A549 (cell line): ENCODE measurements at regions of chr16 and their contacts with region 1.

Region 1: GRCh38 chr16:85610508-85611332 is 2.4 kb upstream of the GSE1 start:
- DNase-seq: peak; percentile 84 to 85
- ATAC-seq: peak; percentile 32 to 63
- H3K4me3 ChIP-seq: peak overlapping the region; percentile 96
- H3K27ac ChIP-seq: peak overlapping the region; percentile 98 to 99
- H3K4me1 ChIP-seq: peaks cover 22% of the 10 kb centered on the region
- CTCF ChIP-seq: peak; percentile 99
- EP300 ChIP-seq: no peak
- POLR2A ChIP-seq: no peak
- RAD21 ChIP-seq: peak; percentile 89 to 98

Region 2: GRCh38 chr16:85126705-85127419 is 483.9 kb before region 1 on chr16:
- CTCF ChIA-PET with region 1: no interaction called
- POLR2A ChIA-PET with region 1: no interaction called
- DNase-seq: no peak
- ATAC-seq: peak in 1 of 2 experiments; percentile 13; a peak in 1 of 6 replicates
- H3K4me3 ChIP-seq: no peak overlapping the region
- H3K27ac ChIP-seq: peak overlapping the region in 1 of 2 experiments; percentile 29; a peak in 1 of 6 replicates
- H3K4me1 ChIP-seq: 0 out of 3 replicates have a peak, but pooled peaks cover 3% of the 10 kb centered on the region
- CTCF ChIP-seq: no peak
- EP300 ChIP-seq: no peak
- POLR2A ChIP-seq: no peak
- RAD21 ChIP-seq: no peak

Region 3: DNA sequence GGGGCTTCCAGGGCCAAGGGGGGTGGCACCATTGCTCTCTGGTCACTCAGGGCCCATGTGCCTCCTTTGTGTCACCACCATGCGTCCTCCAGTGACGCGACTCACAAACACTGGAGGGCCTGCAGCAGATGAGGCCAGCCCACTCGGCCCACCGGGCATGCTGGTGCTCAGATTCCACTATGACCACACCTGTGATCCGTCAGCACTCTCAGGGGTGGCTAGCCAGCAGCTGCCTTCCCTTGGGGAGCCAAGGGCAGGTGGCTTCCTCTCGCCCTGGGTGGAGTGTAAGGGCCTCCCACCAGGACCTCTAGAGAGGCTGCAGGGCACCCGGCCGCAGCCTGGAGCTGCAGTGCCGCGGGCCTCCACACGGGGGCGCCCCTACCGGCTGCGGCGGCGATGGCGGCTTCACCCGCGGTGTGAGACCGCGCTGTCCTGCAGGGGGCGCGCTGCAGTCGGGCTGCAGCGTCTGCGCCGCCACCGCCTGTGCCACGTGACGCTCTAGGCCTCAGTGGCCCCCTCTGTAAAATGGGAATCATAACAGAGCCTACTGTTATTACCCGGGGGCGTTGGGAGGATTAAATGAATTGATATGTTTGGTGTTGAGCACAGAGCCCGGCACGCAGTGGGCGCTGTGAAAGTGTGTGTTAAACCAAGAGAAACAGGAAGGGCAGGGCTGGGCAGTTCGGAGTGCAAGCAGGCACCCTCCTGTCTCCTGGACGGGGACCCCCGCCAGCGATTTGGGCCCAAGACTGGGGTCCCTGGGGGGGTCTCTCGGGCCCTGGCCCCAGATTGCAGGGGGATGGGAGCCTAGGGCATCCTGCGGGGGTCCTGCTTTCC is 190.0 kb before region 1 on chr16:
- CTCF ChIA-PET with region 1: interaction called, 85 read pairs
- POLR2A ChIA-PET with region 1: interaction called, 3 read pairs
- DNase-seq: peak; percentile 74 to 78
- ATAC-seq: peak; percentile 49 to 72; a peak in 5 of 6 replicates
- H3K4me3 ChIP-seq: no peak overlapping the region
- H3K27ac ChIP-seq: peak overlapping the region in 1 of 2 experiments; percentile 86; a peak in 3 of 6 replicates
- H3K4me1 ChIP-seq: peaks cover 27% of the 10 kb centered on the region
- CTCF ChIP-seq: peak; percentile 100
- EP300 ChIP-seq: no peak
- POLR2A ChIP-seq: no peak
- RAD21 ChIP-seq: peak; percentile 64 to 86

Region 4: DNA sequence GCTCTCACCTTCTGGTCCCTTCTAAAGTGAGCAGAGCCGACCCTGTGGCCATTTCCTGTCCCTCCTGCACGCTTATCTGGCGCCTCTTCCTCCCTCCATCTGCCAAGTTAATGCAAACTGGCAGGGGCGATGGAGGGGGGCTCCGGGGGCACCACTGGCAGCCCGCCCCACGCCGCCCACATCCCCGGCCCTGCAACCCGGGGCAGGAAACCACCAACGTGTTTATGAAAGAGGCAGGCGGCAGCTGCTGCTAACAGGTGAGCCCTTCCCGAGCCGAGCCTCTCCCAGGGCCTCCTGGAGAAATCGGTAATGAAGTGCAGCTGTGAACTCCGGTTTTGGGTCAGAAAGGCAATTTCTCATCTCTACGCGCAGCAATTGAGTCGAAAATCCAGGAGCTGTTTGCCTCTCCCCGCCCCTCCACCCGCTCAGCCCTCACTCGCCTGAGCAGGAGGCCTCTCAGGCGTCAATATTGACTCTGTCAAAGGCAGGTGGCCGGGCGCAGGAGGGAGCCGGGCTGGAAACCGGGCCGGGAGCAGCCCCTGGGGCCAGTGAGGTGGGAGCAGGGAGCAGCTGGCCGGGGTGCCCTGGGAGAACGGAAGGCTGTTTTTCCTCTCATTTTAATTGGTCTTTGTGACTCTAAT is 162.0 kb before region 1 on chr16:
- CTCF ChIA-PET with region 1: interaction called, 13 read pairs
- POLR2A ChIA-PET with region 1: no interaction called
- DNase-seq: no peak
- ATAC-seq: no peak
- H3K4me3 ChIP-seq: no peak overlapping the region
- H3K27ac ChIP-seq: no peak overlapping the region
- H3K4me1 ChIP-seq: no peaks in the 10 kb centered on the region
- CTCF ChIP-seq: no peak
- EP300 ChIP-seq: no peak
- POLR2A ChIP-seq: no peak
- RAD21 ChIP-seq: no peak

Region 5: DNA sequence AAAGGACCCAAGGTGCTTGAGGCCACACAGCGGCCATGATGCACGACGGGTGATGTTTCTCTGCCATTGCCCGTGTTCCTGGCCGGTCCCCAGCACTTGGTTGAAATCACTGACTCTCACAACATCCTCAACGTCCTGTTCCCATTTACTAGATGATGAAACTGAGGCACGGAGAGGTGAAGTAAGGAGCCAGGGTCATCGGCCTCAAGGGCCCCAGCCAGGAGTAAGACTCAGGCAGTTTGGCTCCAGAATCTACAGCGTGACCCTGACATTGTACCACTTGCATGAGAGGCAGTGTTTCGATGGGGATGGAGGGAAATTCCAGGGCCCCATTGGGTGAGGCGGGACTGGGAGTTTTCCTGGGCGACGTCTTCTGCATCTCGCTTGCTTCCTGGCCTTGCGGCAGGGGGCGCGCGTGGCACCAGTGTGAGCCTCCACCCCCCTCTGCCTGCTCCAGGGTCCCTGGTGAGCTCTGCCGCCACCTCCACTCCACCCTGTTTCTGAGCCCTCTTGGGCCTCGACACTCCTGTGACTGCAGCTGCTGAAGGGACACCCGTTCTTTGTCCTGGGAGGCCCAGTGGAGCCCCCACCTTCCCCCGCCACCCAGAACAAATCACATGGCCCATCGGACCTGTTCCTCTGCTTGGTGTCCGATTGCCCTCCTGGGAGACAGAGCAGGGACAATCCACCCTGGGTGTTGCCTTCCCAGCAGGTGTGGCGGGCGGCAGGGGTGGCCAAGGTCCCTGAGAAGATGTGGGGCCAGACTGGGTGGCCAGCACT is 130.6 kb before region 1 on chr16:
- CTCF ChIA-PET with region 1: interaction called, 55 read pairs
- POLR2A ChIA-PET with region 1: no interaction called
- DNase-seq: peak; percentile 67 to 94
- ATAC-seq: peak; percentile 89 to 95
- H3K4me3 ChIP-seq: no peak overlapping the region
- H3K27ac ChIP-seq: peak overlapping the region; percentile 18 to 70; a peak in 2 of 6 replicates
- H3K4me1 ChIP-seq: 0 out of 3 replicates have a peak, but pooled peaks cover 3% of the 10 kb centered on the region
- CTCF ChIP-seq: peak; percentile 73
- EP300 ChIP-seq: no peak
- POLR2A ChIP-seq: no peak
- RAD21 ChIP-seq: peak; percentile 65 to 76

Region 6: GRCh38 chr16:85554112-85554813 is 56.5 kb before region 1 on chr16:
- CTCF ChIA-PET with region 1: interaction called, 23 read pairs
- POLR2A ChIA-PET with region 1: interaction called, 14 read pairs
- DNase-seq: peak; percentile 81 to 88
- ATAC-seq: peak; percentile 54 to 72
- H3K4me3 ChIP-seq: peak overlapping the region; percentile 71
- H3K27ac ChIP-seq: peak overlapping the region; percentile 91 to 99
- H3K4me1 ChIP-seq: peaks cover 23% of the 10 kb centered on the region
- CTCF ChIP-seq: no peak
- EP300 ChIP-seq: no peak
- POLR2A ChIP-seq: 0 out of 2 replicates have a peak, but pooled peaks have one; percentile 29
- RAD21 ChIP-seq: no peak

Region 7: DNA sequence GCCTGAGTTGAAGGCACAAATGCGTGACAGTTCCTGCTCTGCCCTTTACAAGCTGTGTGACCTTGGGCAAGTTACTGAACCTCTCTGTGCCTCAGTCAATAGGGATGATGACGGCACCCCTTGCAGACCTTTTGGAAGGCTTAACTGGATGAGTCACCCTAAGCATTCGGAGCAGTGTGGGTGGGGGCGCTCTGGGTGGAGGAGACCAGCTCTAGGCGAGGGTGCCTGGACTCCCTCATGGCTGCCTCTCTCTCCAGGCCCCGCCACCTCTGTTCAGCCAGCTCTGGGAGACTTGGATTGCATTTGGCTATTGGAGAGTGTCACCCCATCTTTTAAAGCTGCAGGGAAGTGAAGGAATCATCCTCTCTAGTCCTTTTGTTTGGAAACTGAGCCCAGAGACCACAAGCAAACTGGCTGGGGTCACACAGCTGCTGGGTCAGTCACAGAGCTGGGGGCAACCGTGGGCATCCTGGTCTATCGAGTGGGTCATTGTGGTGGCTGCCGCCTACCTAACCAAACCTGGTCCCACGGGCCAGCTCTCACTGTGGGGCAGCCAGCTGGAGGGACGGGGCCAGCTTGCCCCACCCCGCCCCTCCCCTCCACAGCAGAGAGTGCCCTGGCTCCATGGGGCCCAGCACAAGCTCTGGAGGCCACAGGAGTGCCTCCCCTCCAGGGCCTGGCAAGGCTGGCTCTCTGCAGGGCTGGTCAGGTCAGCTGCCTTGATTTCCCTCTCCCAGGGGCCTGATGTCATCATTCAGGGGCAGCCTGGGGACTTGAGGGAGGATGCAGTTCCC is 17.8 kb before region 1 on chr16:
- CTCF ChIA-PET with region 1: interaction called, 42 read pairs
- POLR2A ChIA-PET with region 1: no interaction called
- DNase-seq: no peak
- ATAC-seq: peak in 1 of 2 experiments; percentile 35; a peak in 2 of 6 replicates
- H3K4me3 ChIP-seq: no peak overlapping the region
- H3K27ac ChIP-seq: no peak overlapping the region
- H3K4me1 ChIP-seq: no peaks in the 10 kb centered on the region
- CTCF ChIP-seq: no peak
- EP300 ChIP-seq: no peak
- POLR2A ChIP-seq: no peak
- RAD21 ChIP-seq: no peak

Region 8: DNA sequence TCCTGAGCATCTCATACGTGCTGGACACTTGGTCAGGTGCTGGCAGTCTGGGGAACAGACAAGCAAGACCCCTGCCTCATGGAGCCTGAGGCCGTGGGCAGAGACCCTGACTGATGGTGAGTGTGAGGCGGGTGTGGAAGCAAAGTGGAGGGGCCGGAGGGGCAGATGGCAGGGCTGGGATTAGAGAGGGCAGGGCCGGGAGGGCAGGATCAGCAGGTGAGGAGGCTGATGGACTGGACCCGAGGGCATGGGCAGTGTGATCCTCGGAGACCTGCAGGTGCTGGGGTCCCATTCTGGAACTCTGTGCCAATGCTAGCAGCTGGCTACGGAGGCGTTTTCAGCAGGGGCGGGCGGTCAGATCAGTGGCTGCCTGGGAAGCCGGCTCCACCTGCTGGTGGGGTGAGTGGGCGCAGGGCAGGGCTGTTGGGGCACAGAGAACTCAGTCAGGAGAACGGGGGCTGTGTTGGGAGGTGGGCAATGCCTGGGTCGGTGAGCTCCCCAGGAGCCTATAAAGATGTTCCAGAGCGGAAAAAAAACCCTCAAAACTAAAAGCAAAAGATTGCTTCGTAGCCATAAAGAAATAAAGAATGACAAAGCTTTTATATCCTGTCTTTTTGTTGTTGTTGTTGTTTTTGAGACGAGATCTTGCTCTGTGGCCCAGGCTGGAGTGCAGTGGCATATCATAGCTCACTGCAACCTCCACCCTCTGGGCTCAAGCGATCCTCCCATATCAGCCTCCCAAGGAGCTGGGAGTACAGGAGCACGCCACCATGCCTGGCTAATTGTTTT is 149.1 kb after region 1 on chr16:
- CTCF ChIA-PET with region 1: no interaction called
- POLR2A ChIA-PET with region 1: no interaction called
- DNase-seq: peak; percentile 41 to 55
- ATAC-seq: peak; percentile 81 to 93; a peak in 5 of 6 replicates
- H3K4me3 ChIP-seq: no peak overlapping the region
- H3K27ac ChIP-seq: no peak overlapping the region
- H3K4me1 ChIP-seq: no peaks in the 10 kb centered on the region
- CTCF ChIP-seq: peak; percentile 49
- EP300 ChIP-seq: no peak
- POLR2A ChIP-seq: no peak
- RAD21 ChIP-seq: peak; percentile 58 to 70

Region 9: GRCh38 chr16:85821441-85822135 is 210.9 kb after region 1 on chr16:
- CTCF ChIA-PET with region 1: no interaction called
- POLR2A ChIA-PET with region 1: no interaction called
- DNase-seq: peak; percentile 76 to 92
- ATAC-seq: peak; percentile 87 to 92
- H3K4me3 ChIP-seq: no peak overlapping the region
- H3K27ac ChIP-seq: no peak overlapping the region
- H3K4me1 ChIP-seq: no peaks in the 10 kb centered on the region
- CTCF ChIP-seq: peak; percentile 94
- EP300 ChIP-seq: no peak
- POLR2A ChIP-seq: no peak
- RAD21 ChIP-seq: peak; percentile 98 to 99